PC-9 (cell line): ENCODE measurements at regions of chr10 and their contacts with region 1.

Region 1: DNA sequence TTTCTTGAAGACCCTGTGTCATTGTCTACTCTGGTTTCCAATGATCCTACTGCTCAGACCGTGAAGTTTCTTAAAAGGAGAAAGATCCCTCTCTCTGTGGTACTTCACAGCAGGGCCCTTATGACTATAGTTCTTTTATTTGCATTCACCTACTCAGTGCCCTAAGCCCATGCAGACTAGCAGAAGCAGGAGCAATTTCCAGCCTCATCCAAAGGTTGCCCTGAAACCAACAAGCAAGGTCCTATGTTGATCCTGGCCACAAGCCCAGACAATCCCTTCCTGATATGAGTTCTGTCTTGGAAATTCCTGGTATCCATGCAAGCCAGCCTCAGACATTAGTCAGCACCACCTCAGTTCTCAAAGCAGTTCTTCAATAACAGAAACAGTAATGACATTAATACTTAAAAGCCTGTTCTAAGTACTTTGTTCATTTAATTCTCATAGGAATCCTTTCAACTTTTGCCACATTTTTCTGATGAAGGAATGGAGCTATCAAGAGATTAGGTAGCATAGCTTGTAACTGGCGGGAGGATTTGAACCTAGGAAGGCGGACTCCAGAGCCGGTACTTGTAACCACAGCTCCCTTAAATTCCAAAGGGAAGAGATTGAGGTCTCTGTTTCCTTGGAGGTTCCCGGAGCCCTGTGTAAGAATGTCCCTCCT is 58.1 kb upstream of the ST8SIA6 start:
- DNase-seq: peak; percentile 75 to 89
- H3K4me3 ChIP-seq: no peak overlapping the region; the same call in 1 of the 2 replicates
- H3K27ac ChIP-seq: peak overlapping the region; percentile 88
- H3K4me1 ChIP-seq: peaks cover 31% of the 10 kb centered on the region
- H3K27me3 ChIP-seq: no peaks in the 10 kb centered on the region
- CTCF ChIP-seq: no peak

Region 2: DNA sequence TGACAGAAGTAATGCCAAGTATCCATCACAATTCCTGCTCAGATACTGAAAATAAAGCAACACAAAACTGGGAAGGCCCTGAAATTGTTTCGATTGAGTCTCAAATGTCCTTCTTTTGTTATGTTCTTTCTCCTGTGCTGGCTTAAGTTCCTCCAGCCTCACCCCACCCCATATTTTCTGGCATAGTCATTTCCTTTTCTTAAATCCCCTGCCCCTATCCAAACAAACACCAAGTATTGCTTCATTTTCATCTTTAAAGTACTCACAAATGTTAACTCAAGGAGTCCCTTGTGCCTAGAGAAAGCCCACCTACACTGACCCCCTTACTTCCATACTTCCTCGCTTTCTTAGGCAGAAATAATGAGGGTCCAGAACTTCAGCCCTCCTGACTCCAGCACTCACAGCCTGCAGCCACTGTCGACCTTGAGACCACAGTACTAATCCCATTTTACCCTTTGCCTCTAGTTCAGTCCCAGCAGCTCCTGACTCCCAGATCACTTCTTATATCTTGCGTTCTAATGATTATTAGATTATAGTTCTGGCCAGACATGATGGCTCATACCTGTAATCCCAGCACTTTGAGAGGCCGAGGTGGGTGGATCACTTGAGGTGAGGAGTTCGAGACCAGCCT is 15.2 kb after region 1 on chr10:
- CTCF ChIA-PET with region 1: no interaction called
- POLR2A ChIA-PET with region 1: no interaction called
- intact Hi-C with region 1: loop called (anchors 1 kb)
- DNase-seq: peak; percentile 55 to 75
- H3K4me3 ChIP-seq: no peak overlapping the region
- H3K27ac ChIP-seq: peak overlapping the region; percentile 92
- H3K4me1 ChIP-seq: peaks cover 17% of the 10 kb centered on the region
- H3K27me3 ChIP-seq: no peaks in the 10 kb centered on the region
- CTCF ChIP-seq: no peak